ENCODE measurements at regions of chrX and their contacts with region 1.

Region 1: GRCh38 chrX:72121383-72121782 is 10.3 kb downstream of the RTL5 start:
- DNase-seq: peak in 10 of 42 donors; percentile 17 to 66 (median 40)

Region 2: DNA sequence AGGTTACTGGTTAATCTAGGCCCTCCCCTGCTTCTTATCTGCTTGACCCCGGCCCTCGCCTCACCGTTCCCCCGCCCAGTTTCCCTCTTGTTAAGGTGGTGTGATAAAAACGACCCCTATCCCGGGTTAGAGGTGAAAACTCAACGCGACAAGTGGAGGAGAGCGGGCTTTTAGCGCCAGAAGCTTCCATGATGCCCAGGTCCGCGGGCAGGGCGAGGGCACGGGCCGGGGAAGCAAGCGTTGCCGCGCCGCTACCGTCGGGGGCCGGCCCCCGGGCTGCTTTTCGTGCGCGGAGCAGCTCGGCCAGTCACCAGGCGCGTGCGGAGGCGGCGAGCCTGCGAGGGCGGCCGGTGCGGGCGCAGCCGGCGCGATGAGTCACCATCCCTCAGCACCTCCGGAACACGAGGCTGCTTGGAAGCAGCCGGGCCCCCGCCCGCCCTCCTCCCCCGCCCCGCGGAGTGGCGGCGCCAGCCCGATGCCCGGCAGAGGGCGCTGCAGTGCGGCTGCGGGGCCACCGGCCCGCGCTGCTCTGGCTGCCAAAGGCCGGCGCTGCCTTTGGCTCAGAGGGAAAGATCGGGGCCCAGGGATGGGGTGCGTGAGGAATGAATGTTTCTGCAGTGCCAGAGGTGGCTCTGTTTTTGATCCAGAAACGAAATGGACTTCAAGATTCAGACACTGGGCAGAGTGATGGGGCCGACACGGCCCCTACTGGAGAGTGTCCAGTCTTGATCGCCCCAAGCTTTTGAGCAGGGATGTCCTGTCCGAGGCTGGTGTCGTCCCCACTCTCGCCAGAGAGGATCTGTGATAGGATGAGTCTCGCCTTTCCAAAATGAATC is 102.9 kb before region 1 on chrX:
- intact Hi-C with region 1: loop called (anchors 5 kb)
- DNase-seq: peak; percentile 33 to 91 (median 80)

Region 3: GRCh38 chrX:72308566-72309296 is 187.3 kb after region 1 on chrX:
- intact Hi-C with region 1: no loop called
- DNase-seq: peak in 41 of 42 donors; percentile 29 to 79 (median 59)